ENCODE measurements at regions of chr18 and their contacts with region 1.

Region 1: DNA sequence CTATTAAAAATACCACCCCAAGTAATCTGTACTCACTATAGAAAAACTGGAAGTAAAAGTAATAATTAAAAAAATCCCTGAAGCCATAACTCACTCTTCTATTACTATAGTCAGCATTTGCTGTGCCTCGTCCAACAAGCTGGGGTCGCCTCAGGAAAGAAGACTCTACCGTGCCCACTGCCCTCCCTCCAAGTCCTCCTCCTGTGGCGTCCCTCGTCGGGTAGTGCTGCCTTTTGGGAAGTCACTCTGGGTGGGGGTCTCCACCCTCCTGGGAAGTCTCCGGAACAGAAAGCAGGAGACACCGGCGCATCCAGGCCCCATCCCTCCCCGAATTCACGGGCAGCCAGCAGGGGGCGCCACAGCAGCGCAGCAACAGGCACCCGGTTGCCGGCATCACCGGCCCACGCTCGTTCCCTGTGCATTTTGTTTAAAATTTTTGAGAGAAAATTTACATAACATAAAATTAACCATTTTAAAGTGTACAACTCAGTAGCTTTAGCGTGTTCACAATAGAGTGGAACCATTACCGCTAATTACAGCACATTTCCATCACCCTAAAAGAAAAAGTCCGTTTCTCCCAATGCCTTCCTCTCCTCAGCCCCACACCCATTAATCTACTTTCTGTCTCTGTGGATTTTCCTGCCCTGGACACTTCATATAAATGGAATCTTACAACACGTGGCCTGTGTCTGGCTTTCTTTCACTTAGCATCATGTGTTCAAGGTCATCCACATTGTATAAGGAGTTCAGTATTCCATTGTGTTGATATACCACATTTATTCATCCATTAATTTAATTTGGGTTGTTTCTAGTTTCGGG is 62.2 kb downstream of the ADNP2 start:
- DNase-seq: peak; percentile 73
- ATAC-seq: no peak
- H3K4me3 Mint-ChIP-seq: no peak overlapping the region
- H3K27ac Mint-ChIP-seq: no peak overlapping the region
- H3K4me1 Mint-ChIP-seq: peaks cover 22% of the 10 kb centered on the region
- H3K27me3 Mint-ChIP-seq: peaks cover 20% of the 10 kb centered on the region
- CTCF ChIP-seq: peak; percentile 98

Region 2: GRCh38 chr18:79841936-79842335 is 329.3 kb before region 1 on chr18:
- CTCF ChIA-PET with region 1: no interaction called
- POLR2A ChIA-PET with region 1: no interaction called
- intact Hi-C with region 1: no loop called
- DNase-seq: no peak
- ATAC-seq: no peak
- H3K4me3 Mint-ChIP-seq: no peak overlapping the region
- H3K27ac Mint-ChIP-seq: no peak overlapping the region
- H3K4me1 Mint-ChIP-seq: peaks cover 3% of the 10 kb centered on the region
- H3K27me3 Mint-ChIP-seq: peaks cover 11% of the 10 kb centered on the region
- CTCF ChIP-seq: no peak

Region 3: GRCh38 chr18:80068571-80069267 is 102.5 kb before region 1 on chr18:
- CTCF ChIA-PET with region 1: no interaction called
- POLR2A ChIA-PET with region 1: no interaction called
- intact Hi-C with region 1: no loop called
- DNase-seq: no peak
- ATAC-seq: no peak
- H3K4me3 Mint-ChIP-seq: no peak overlapping the region
- H3K27ac Mint-ChIP-seq: no peak overlapping the region
- H3K4me1 Mint-ChIP-seq: no peaks in the 10 kb centered on the region
- H3K27me3 Mint-ChIP-seq: no peaks in the 10 kb centered on the region
- CTCF ChIP-seq: no peak

Region 4: GRCh38 chr18:80183273-80184050 is 12.2 kb after region 1 on chr18:
- CTCF ChIA-PET with region 1: interaction called, 11 read pairs
- POLR2A ChIA-PET with region 1: no interaction called
- intact Hi-C with region 1: no loop called
- DNase-seq: no peak
- ATAC-seq: no peak
- H3K4me3 Mint-ChIP-seq: no peak overlapping the region
- H3K27ac Mint-ChIP-seq: no peak overlapping the region
- H3K4me1 Mint-ChIP-seq: no peaks in the 10 kb centered on the region
- H3K27me3 Mint-ChIP-seq: no peaks in the 10 kb centered on the region
- CTCF ChIP-seq: no peak

Region 5: GRCh38 chr18:80200171-80200931 is 29.1 kb after region 1 on chr18:
- CTCF ChIA-PET with region 1: interaction called, 11 read pairs
- POLR2A ChIA-PET with region 1: no interaction called
- intact Hi-C with region 1: no loop called
- DNase-seq: no peak
- ATAC-seq: no peak
- H3K4me3 Mint-ChIP-seq: no peak overlapping the region
- H3K27ac Mint-ChIP-seq: no peak overlapping the region
- H3K4me1 Mint-ChIP-seq: peaks cover 16% of the 10 kb centered on the region
- H3K27me3 Mint-ChIP-seq: peaks cover 33% of the 10 kb centered on the region
- CTCF ChIP-seq: no peak

Region 6: GRCh38 chr18:80253871-80254492 is 82.7 kb after region 1 on chr18:
- CTCF ChIA-PET with region 1: interaction called, 39 read pairs
- POLR2A ChIA-PET with region 1: interaction called, 3 read pairs
- intact Hi-C with region 1: no loop called
- DNase-seq: peak; percentile 35
- ATAC-seq: peak; percentile 90
- H3K4me3 Mint-ChIP-seq: no peak overlapping the region
- H3K27ac Mint-ChIP-seq: no peak overlapping the region
- H3K4me1 Mint-ChIP-seq: no peaks in the 10 kb centered on the region
- H3K27me3 Mint-ChIP-seq: peaks cover 7% of the 10 kb centered on the region
- CTCF ChIP-seq: no peak

Measured in activated CD8-positive, alpha-beta T cell treated with anti-CD3 and anti-CD28 coated beads for 36 hours (primary cell).